Dendritic cell treated with granulocyte-macrophage colony-stimulating factor and Interleukin-4, amounts not matched to agents 40 ng/mL and 50 ng/mL, for 4 days (primary cell): ENCODE measurements at regions of chr11 and their contacts with region 1.

Region 1: DNA sequence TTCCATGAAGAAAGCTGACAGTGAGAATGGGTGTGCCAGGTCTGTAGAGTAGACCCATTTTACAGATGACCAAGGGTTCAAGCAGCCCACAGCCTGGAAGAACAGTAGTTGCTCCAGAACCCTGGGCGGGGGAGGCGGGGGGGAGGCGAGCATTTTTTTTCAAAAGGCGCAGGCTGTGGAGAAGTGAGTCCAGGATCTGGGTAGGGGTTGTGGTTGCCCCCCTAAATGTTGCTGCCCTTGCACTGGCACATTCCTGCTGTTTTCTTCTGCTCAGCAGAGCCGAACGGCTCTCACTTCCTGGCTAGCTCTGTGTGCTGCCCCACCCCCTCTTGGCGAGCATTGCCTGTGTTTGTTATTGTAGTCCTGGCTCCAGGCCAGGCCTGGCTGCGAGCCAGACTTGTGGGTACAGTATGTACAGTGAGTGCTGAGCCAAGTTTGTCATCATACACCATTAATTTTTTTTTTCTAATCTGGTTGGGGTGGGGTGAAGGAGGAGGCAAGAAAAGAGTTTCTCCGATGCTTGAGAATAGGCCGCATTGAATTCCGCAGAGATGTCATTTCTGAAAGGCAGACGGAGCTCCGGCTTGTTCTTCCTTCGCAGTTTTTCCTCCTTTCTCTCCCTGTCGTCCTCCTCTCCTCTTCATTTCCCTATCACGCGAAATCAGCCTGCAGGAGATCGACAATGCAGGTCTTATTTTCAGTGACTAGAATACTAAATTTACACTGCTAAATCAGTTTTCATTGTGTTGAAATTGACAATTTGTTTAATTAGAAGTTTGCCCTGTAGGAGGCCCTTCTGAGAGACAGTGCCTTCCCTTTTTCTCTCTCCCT is 100.5 kb downstream of the ZBTB16 start:
- H3K4me3 Mint-ChIP-seq: peak overlapping the region; percentile 51
- H3K27ac Mint-ChIP-seq: peak overlapping the region; percentile 59
- H3K4me1 Mint-ChIP-seq: peaks cover 83% of the 10 kb centered on the region
- H3K27me3 Mint-ChIP-seq: peaks cover 13% of the 10 kb centered on the region

Region 2: GRCh38 chr11:114080219-114080618 is 79.8 kb before region 1 on chr11:
- intact Hi-C with region 1: loop called (anchors 5 kb)
- H3K4me3 Mint-ChIP-seq: no peak overlapping the region
- H3K27ac Mint-ChIP-seq: peak overlapping the region; percentile 21
- H3K4me1 Mint-ChIP-seq: peaks cover 73% of the 10 kb centered on the region
- H3K27me3 Mint-ChIP-seq: peaks cover 74% of the 10 kb centered on the region

Region 3: GRCh38 chr11:114257621-114258558 is 97.9 kb after region 1 on chr11:
- intact Hi-C with region 1: loop called (anchors 5 kb)
- H3K4me3 Mint-ChIP-seq: no peak overlapping the region
- H3K27ac Mint-ChIP-seq: no peak overlapping the region
- H3K4me1 Mint-ChIP-seq: peaks cover 18% of the 10 kb centered on the region
- H3K27me3 Mint-ChIP-seq: peaks cover 4% of the 10 kb centered on the region